ENCODE measurements at regions of chr1 and their contacts with region 1.

Region 1: GRCh38 chr1:175154629-175155472 is 37.7 kb downstream of the KIAA0040 start:
- DNase-seq: peak; percentile 69 to 76
- ATAC-seq: peak; percentile 31 to 66 (median 60)
- H3K4me3 ChIP-seq: no peak overlapping the region
- H3K27ac ChIP-seq: no peak overlapping the region
- H3K4me1 ChIP-seq: peaks cover 0 to 25% (median 11%) of the 10 kb centered on the region in 9 donors
- H3K27me3 ChIP-seq: peaks cover 0 to 20% (median 0%) of the 10 kb centered on the region in 7 donors
- CTCF ChIP-seq: peak; percentile 79 to 94 (median 91)

Region 2: GRCh38 chr1:175192630-175193526 is 38.0 kb after region 1 on chr1 and contains the start of gene KIAA0040:
- intact Hi-C with region 1: loop called in 2 of 10 experiments (anchors 2 to 5 kb)
- DNase-seq: peak; percentile 84 to 87
- ATAC-seq: peak; percentile 85 to 94 (median 87)
- H3K4me3 ChIP-seq: peak within 1 kb of the TSS; percentile 49 to 95 (median 74)
- H3K27ac ChIP-seq: peak within 1 kb of the TSS; percentile 79 to 97 (median 88)
- H3K4me1 ChIP-seq: peaks cover 6 to 66% (median 46%) of the 10 kb centered on the region in 9 donors
- H3K27me3 ChIP-seq: no peaks in the 10 kb centered on the region
- CTCF ChIP-seq: peak in 3 of 9 donors; percentile 33 to 43 (median 36)
- total RNA-seq, gene KIAA0040: 6.3 to 37.2 (median 11.1) TPM

Region 3: GRCh38 chr1:175274368-175274767 is 119.5 kb after region 1 on chr1:
- intact Hi-C with region 1: loop called in 1 of 10 experiments (anchors 5 kb)
- DNase-seq: no peak
- ATAC-seq: no peak
- H3K4me3 ChIP-seq: no peak overlapping the region
- H3K27ac ChIP-seq: no peak overlapping the region
- H3K4me1 ChIP-seq: peaks cover 0 to 36% (median 12%) of the 10 kb centered on the region in 9 donors
- H3K27me3 ChIP-seq: no peaks in the 10 kb centered on the region
- CTCF ChIP-seq: no peak

Region 4: DNA sequence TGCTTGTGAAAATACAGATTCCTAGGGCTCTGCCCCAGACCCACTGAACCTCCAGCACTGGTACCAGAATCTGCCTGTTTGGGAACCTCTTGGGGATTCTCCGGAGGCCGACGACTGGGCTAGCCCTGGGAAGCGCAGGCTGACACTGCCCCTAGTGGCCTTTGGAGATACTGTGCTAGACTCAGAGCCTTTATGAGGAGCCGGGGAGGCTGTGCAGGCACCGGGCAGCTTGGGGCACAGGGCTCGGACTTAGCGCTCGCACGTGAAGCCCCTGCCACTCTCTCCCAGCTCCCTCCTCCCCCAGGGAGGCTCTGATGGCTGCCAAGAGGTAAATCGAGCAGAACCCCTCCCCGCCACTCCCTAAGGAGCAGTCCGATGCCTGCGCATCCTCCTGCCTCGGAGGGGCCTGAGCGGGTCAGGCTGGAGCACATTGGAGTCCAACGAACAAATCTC is 733.2 kb after region 1 on chr1:
- intact Hi-C with region 1: loop called in 4 of 10 experiments (anchors 5 to 10 kb)
- DNase-seq: peak; percentile 52 to 61
- ATAC-seq: peak; percentile 85 to 92 (median 88)
- H3K4me3 ChIP-seq: no peak overlapping the region
- H3K27ac ChIP-seq: no peak overlapping the region
- H3K4me1 ChIP-seq: peaks cover 0 to 13% (median 0%) of the 10 kb centered on the region in 9 donors
- H3K27me3 ChIP-seq: no peaks in the 10 kb centered on the region
- CTCF ChIP-seq: peak; percentile 63 to 85 (median 81)

Region 5: GRCh38 chr1:176843352-176844297 is 1688.8 kb after region 1 on chr1:
- intact Hi-C with region 1: loop called in 3 of 10 experiments (anchors 5 to 10 kb)
- DNase-seq: peak in 1 of 2 donors; percentile 19
- ATAC-seq: peak in 7 of 8 donors; percentile 40 to 72 (median 54)
- H3K4me3 ChIP-seq: no peak overlapping the region
- H3K27ac ChIP-seq: no peak overlapping the region
- H3K4me1 ChIP-seq: peaks cover 0 to 37% (median 5%) of the 10 kb centered on the region in 9 donors
- H3K27me3 ChIP-seq: no peaks in the 10 kb centered on the region
- CTCF ChIP-seq: peak; percentile 26 to 74 (median 61)